Activated B cell treated with CpG ODN at 0.5 μM for 24 hours (primary cell): ENCODE measurements at regions of chrX and their contacts with region 1.

Region 1: DNA sequence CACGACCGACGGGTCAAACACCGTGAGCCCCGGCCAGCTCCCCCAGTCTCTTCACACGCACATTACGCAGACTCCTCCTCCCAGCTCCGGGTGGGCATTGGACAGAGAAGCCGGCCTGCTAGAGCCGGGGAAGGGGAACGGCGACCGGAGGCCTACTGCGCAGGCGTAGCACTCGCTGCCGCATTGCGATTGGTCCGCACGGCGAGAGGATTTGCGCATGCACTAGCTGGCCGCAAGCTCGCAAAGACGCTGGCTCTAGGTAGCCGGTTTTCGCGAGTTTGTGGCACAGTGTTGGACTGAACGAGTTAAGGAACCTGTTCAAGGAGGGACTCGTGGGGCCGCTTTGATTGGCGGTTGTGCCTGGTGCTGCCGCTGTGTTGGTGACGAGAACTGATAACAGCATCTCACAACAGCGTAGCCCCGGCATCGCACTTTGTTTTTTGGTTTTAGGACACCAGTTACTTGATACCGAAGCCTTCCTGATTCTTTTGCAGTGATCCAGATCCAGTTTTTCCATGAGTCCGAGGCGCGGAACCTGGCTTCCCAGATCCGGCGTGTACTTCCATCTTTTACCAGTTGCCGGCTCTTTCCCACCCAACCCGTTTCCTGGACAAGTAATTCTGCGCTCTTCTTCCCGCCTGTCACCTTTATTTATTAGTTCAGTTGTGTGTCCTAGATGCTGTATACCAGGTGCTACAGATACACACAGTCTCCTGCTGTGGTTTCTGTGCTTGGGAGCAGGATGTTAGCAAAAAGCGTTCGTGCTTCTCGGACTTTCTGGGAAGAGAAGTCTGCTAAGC is at the start of gene AIFM1:
- DNase-seq: peak; percentile 74
- ATAC-seq: peak; percentile 88
- H3K4me3 Mint-ChIP-seq: peak within 1 kb of the TSS; percentile 93
- H3K27ac Mint-ChIP-seq: peak within 1 kb of the TSS; percentile 95
- H3K4me1 Mint-ChIP-seq: peaks cover 27% of the 10 kb centered on the region
- H3K27me3 Mint-ChIP-seq: no peaks in the 10 kb centered on the region
- CTCF ChIP-seq: no peak
- total RNA-seq, gene AIFM1: 30.8 and 34.3 TPM in 2 replicates

Region 2: DNA sequence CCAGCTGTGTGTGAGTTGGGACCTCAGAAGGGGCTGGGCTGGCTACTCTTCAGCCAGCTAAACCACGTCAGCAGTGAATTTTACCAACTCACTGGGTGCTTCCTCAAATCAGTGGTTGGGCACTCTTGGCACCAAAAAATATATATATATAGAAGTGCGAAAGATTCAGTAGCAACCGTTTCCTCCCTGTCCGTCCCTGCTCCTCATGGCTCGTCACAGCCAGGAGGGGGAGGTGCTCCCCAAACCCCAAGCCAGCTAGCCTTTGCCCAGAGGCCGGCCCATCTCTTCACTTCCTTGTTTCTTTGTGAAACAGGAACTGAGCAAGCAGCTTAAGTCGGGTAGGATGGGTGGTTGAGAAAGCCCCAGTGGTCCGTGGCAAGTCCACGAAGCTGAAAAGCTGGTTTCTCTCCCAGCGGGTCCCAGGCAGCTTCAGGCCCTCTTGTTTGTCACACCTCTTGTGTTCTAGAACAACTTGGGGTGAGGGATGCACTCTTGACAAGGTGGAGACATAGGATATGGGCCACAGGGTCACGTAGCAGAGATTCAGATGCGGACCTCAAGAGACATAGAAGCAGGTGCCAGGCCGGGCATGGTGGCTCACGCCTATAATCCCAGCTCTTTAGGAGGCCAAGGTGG is 393.0 kb before region 1 on chrX:
- CTCF ChIA-PET with region 1: no interaction called
- POLR2A ChIA-PET with region 1: interaction called, 7 read pairs
- intact Hi-C with region 1: loop called (anchors 5 kb)
- DNase-seq: peak; percentile 59
- ATAC-seq: peak; percentile 76
- H3K4me3 Mint-ChIP-seq: peak overlapping the region; percentile 62
- H3K27ac Mint-ChIP-seq: peak overlapping the region; percentile 97
- H3K4me1 Mint-ChIP-seq: peaks cover 84% of the 10 kb centered on the region
- H3K27me3 Mint-ChIP-seq: no peaks in the 10 kb centered on the region
- CTCF ChIP-seq: no peak

Region 3: GRCh38 chrX:129843459-129844306 is 322.2 kb before region 1 on chrX and contains the start of gene ZDHHC9:
- CTCF ChIA-PET with region 1: no interaction called
- POLR2A ChIA-PET with region 1: no interaction called
- intact Hi-C with region 1: no loop called
- DNase-seq: peak; percentile 74
- ATAC-seq: peak; percentile 99
- H3K4me3 Mint-ChIP-seq: peak within 1 kb of the TSS; percentile 94
- H3K27ac Mint-ChIP-seq: peak within 1 kb of the TSS; percentile 77
- H3K4me1 Mint-ChIP-seq: peaks cover 14% of the 10 kb centered on the region
- H3K27me3 Mint-ChIP-seq: no peaks in the 10 kb centered on the region
- CTCF ChIP-seq: no peak
- total RNA-seq, gene ZDHHC9: 3.9 and 4.2 TPM in 2 replicates

Region 4: GRCh38 chrX:129982274-129983251 is 183.3 kb before region 1 on chrX and contains the start of gene BCORL1:
- CTCF ChIA-PET with region 1: no interaction called
- POLR2A ChIA-PET with region 1: no interaction called
- intact Hi-C with region 1: loop called (anchors 5 kb)
- DNase-seq: peak; percentile 70
- ATAC-seq: peak; percentile 89
- H3K4me3 Mint-ChIP-seq: no peak within 1 kb of the TSS
- H3K27ac Mint-ChIP-seq: peak within 1 kb of the TSS; percentile 68
- H3K4me1 Mint-ChIP-seq: peaks cover 18% of the 10 kb centered on the region
- H3K27me3 Mint-ChIP-seq: no peaks in the 10 kb centered on the region
- CTCF ChIP-seq: no peak
- total RNA-seq, gene BCORL1: 8.0 and 8.2 TPM in 2 replicates

Region 5: DNA sequence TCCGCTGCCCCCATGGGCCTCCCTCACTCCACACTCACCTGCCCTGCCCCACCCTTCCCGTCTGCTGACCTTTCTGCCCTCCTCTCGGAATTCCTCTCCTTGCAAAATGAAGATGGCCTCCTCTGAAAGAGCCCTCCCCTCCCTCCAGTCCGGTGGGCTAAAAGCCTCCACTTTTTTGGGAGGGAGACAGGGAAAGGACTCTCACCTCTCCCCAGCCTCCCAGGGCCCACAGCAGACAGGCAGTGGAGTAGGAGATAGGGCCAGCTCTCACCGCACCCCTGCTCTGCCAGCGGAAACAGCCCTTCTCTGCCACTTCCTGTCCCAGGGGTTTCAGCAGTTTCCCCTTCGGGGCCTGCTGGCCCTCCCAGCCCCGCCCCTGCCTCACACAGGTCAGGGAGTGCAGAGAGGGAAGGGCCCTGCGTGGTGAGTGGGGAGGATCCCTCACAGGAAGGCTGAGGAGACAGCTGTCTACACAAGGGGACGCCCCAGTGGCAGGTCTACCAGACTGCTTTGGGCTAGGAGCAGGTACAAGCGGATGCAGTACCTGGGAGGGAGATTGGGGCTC is 73.9 kb before region 1 on chrX:
- CTCF ChIA-PET with region 1: no interaction called
- POLR2A ChIA-PET with region 1: interaction called, 3 read pairs
- intact Hi-C with region 1: loop called (anchors 1 kb)
- DNase-seq: peak; percentile 56
- ATAC-seq: peak; percentile 96
- H3K4me3 Mint-ChIP-seq: peak overlapping the region; percentile 82
- H3K27ac Mint-ChIP-seq: peak overlapping the region; percentile 94
- H3K4me1 Mint-ChIP-seq: peaks cover 62% of the 10 kb centered on the region
- H3K27me3 Mint-ChIP-seq: no peaks in the 10 kb centered on the region
- CTCF ChIP-seq: no peak

Region 6: DNA sequence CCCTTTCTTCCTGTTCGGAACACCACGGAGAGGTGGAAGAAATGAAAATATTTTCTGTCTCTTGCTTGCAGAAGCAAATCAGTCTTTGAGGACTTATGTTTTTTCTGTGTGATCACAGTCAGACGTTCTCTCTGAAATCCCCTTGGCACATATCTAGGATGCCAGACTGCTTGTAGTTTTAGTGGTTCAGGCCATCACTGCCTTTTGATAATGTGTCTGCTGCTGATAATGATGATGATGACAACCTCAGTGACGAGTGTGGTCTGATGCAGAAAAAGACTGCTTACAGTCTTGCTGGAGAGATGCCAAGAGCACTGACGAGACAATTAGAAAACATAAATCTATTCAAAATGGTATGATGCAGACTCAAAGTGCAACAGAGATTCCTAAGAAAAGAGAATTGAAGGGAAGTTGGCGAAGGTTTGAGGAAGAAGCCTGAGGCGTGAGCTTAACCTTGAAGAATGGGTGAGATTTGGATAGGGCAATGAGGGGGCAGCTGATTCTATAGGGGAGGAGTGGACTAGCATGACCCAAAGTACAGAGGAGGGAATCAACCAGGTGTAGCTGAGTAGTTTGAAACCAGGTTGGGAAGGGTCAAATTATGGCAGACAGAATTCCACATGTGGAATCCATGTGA is 13.8 kb after region 1 on chrX:
- CTCF ChIA-PET with region 1: interaction called, 5 read pairs
- POLR2A ChIA-PET with region 1: interaction called, 15 read pairs
- intact Hi-C with region 1: loop called (anchors 1 kb)
- DNase-seq: no peak
- ATAC-seq: no peak
- H3K4me3 Mint-ChIP-seq: no peak overlapping the region
- H3K27ac Mint-ChIP-seq: no peak overlapping the region
- H3K4me1 Mint-ChIP-seq: peaks cover 42% of the 10 kb centered on the region
- H3K27me3 Mint-ChIP-seq: no peaks in the 10 kb centered on the region
- CTCF ChIP-seq: no peak

Region 7: DNA sequence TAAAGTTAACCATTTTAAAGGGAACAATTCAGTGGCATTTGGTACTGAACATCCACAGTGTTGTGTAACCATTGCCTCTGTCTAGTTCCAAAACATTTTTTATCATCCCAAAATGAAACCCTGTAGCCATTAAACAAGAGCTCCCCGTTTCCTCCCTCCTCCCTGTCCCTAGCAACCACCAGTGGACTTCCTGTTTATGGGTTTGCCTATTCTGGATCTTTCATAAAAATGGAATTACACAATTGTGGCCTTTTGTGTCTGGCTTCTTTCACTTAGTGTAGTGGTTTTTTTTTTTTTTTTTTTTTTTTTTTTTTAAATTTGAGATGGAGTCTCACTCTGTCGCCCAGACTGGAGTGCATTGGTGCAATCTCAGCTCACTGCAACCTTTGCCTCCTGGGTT is 247.5 kb after region 1 on chrX:
- CTCF ChIA-PET with region 1: no interaction called
- POLR2A ChIA-PET with region 1: no interaction called
- intact Hi-C with region 1: no loop called
- DNase-seq: no peak
- ATAC-seq: no peak
- H3K4me3 Mint-ChIP-seq: no peak overlapping the region
- H3K27ac Mint-ChIP-seq: no peak overlapping the region
- H3K4me1 Mint-ChIP-seq: no peaks in the 10 kb centered on the region
- H3K27me3 Mint-ChIP-seq: no peaks in the 10 kb centered on the region
- CTCF ChIP-seq: no peak